GM10248 (cell line): ENCODE measurements at regions of chr19 and their contacts with region 1.

Region 1: GRCh38 chr19:17170538-17171297 is 44.4 kb upstream of the USE1 start:
- DNase-seq: peak; percentile 83
- CTCF ChIP-seq: no peak

Region 2: DNA sequence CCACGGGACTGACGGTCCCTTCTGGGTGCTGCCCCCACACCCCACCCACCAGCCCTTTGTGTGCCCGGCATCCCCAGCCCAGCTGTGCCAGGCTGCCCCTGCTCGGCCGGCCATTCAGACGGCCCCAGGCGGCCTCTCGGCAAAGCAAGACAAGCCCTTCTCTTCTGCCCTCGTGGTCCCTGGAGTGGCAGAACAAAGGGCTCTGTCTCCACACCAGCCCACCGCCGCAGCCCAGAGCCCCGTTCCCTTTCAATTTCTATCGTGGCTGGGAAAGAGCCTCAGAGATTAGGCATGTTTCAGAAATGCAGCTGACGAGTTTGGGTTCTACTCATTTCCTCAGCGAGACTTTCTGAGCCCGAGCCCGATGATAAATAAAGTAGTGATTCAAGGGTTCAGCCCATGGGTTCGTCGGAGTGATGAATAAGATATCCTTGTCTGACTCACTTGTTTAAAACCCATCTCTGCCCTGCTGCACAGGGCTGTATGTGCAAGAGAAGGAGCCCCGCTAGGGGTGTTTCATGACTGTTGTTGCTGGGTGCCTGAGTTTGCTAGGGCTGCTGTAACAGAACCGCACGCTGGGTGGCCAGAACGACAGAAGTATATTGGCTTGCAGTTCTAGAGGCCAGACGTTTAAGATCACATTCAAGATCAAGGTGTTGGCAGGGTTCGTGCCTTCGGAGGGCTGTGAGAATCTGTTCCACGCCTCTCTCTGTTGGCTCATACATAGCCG is 90.8 kb before region 1 on chr19:
- CTCF ChIA-PET with region 1: interaction called, 3 read pairs
- POLR2A ChIA-PET with region 1: interaction called, 10 read pairs
- DNase-seq: peak; percentile 70
- CTCF ChIP-seq: peak; percentile 27

Region 3: DNA sequence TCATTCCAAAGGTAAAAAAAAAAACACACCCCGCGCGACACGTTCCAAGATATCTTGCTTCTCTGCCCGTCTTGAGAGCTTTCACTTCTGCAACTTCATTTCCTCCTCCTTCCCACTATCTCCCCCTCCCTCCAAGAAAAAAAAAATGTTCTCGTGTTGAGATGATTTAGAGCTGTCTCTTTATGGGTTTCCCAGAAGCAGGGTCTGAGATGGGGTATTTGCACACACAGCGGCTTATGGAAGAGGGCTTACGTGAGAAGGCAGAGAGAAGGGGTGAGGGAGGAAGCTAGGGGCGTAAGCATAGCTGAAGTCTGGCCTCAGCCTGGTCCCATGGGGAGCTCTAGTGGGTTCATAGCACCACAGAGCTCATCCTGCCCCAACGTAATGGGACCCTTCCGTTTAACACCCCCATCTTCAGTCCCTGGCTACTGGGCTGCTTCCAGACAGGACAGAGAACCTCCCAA is 13.2 kb after region 1 on chr19:
- CTCF ChIA-PET with region 1: interaction called, 12 read pairs
- POLR2A ChIA-PET with region 1: no interaction called
- DNase-seq: peak; percentile 62
- CTCF ChIP-seq: no peak